ENCODE measurements at regions of chr5 and their contacts with region 1.

Region 1: GRCh38 chr5:130720355-130720754 is 444.7 kb downstream of the HINT1 start:
- DNase-seq: peak; percentile 55
- H3K4me3 ChIP-seq: no peak overlapping the region
- H3K27ac ChIP-seq: no peak overlapping the region
- H3K4me1 ChIP-seq: no peaks in the 10 kb centered on the region
- H3K27me3 ChIP-seq: no peaks in the 10 kb centered on the region
- CTCF ChIP-seq: peak; percentile 76 to 83

Region 2: GRCh38 chr5:129904102-129904666 is 816.2 kb before region 1 on chr5 and contains the start of gene CHSY3:
- CTCF ChIA-PET with region 1: no interaction called
- dilution Hi-C with region 1: no loop called
- in situ Hi-C with region 1: no loop called
- intact Hi-C with region 1: loop called (anchors 10 kb)
- DNase-seq: peak; percentile 86
- H3K4me3 ChIP-seq: peak within 1 kb of the TSS; percentile 11 to 62 (median 57)
- H3K27ac ChIP-seq: no peak within 1 kb of the TSS
- H3K4me1 ChIP-seq: peaks cover 14% of the 10 kb centered on the region
- H3K27me3 ChIP-seq: peaks cover 18% of the 10 kb centered on the region
- CTCF ChIP-seq: no peak
- total RNA-seq, gene CHSY3: 1.7 to 1.8 TPM

Region 3: GRCh38 chr5:130109152-130109551 is 611.2 kb before region 1 on chr5:
- CTCF ChIA-PET with region 1: no interaction called
- dilution Hi-C with region 1: no loop called
- in situ Hi-C with region 1: loop called in 1 of 2 experiments (anchors 25 kb)
- intact Hi-C with region 1: loop called (anchors 2 kb)
- DNase-seq: peak; percentile 30
- H3K4me3 ChIP-seq: no peak overlapping the region
- H3K27ac ChIP-seq: no peak overlapping the region
- H3K4me1 ChIP-seq: no peaks in the 10 kb centered on the region
- H3K27me3 ChIP-seq: no peaks in the 10 kb centered on the region
- CTCF ChIP-seq: peak; percentile 48 to 70

Region 4: DNA sequence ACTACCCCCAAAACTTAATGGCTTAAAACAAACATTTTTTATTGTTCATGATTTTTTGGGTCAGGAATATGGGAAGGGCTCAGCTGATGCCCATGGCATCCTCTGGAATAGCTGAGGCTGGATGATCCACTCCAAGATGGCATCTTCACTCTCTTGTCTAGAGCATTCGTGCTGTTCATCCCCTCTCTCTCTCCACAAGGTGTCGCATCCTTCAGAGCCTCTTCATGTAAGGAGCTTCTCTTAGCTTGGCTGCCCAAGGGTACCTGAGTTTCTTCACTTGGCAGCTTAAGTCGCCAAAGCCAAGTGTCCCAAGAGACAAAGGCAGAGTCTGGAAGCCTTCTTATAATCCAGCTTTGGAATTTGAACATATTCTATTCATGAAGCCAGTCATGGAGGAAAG is 521.4 kb before region 1 on chr5:
- CTCF ChIA-PET with region 1: no interaction called
- dilution Hi-C with region 1: no loop called
- in situ Hi-C with region 1: no loop called
- intact Hi-C with region 1: loop called (anchors 10 kb)
- DNase-seq: no peak
- H3K4me3 ChIP-seq: no peak overlapping the region
- H3K27ac ChIP-seq: no peak overlapping the region
- H3K4me1 ChIP-seq: no peaks in the 10 kb centered on the region
- H3K27me3 ChIP-seq: no peaks in the 10 kb centered on the region
- CTCF ChIP-seq: no peak

Region 5: DNA sequence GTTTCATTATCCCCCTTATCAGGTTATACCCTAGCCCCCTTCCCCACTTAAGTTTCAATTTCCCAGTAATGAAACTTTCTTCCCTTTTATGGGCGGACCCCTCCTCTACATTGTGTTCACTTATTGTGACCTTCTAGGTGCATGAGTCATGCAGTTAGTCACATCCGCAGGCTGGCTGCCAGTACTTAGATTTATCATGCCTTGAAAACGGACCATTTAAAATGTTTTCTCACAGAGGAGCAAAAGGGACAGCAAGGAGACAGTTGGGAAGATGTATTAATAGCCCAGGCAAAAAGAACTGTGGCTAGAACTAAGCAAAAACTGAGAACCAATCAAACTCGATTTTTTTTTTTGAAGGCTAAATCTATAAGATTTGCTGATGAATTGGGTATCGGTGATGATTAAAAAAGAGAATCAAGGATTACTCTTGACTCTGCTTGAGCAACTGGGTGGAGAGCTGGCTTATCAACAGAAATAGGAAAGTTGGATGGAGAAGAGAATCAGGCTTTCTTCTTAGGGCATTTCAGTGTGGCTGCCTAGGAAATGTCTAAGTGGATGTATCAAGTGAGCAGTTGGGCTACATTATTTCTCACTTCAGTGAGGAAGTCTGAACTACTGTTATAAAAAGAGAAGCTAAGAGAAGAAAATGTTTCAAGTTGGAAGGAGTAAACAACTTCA is 170.3 kb before region 1 on chr5:
- CTCF ChIA-PET with region 1: no interaction called
- dilution Hi-C with region 1: no loop called
- in situ Hi-C with region 1: no loop called
- intact Hi-C with region 1: loop called (anchors 5 kb)
- DNase-seq: peak; percentile 85
- H3K4me3 ChIP-seq: peak overlapping the region in 1 of 3 experiments; percentile 27
- H3K27ac ChIP-seq: peak overlapping the region; percentile 72
- H3K4me1 ChIP-seq: peaks cover 40% of the 10 kb centered on the region
- H3K27me3 ChIP-seq: no peaks in the 10 kb centered on the region
- CTCF ChIP-seq: no peak